IMR-90 (cell line): ENCODE measurements at regions of chr15 and their contacts with region 1.

Region 1: GRCh38 chr15:67992834-67993233 is 61.3 kb upstream of the PIAS1 start:
- DNase-seq: no peak
- ATAC-seq: no peak
- H3K4me3 ChIP-seq: no peak overlapping the region
- H3K27ac ChIP-seq: no peak overlapping the region
- H3K4me1 ChIP-seq: peaks cover 3% of the 10 kb centered on the region
- H3K27me3 ChIP-seq: peaks cover 18% of the 10 kb centered on the region
- CTCF ChIP-seq: no peak
- POLR2A ChIP-seq: no peak
- RAD21 ChIP-seq: no peak

Region 2: GRCh38 chr15:68025835-68026424 is 33.1 kb after region 1 on chr15:
- CTCF ChIA-PET with region 1: interaction called, 5 read pairs
- POLR2A ChIA-PET with region 1: no interaction called
- dilution Hi-C with region 1: no loop called
- in situ Hi-C with region 1: no loop called
- intact Hi-C with region 1: loop called (anchors 5 kb)
- DNase-seq: peak; percentile 37
- ATAC-seq: peak; percentile 82
- H3K4me3 ChIP-seq: no peak overlapping the region
- H3K27ac ChIP-seq: no peak overlapping the region
- H3K4me1 ChIP-seq: no peaks in the 10 kb centered on the region
- H3K27me3 ChIP-seq: peaks cover 20% of the 10 kb centered on the region
- CTCF ChIP-seq: no peak
- POLR2A ChIP-seq: no peak
- RAD21 ChIP-seq: no peak